HepG2 (cell line): ENCODE measurements at regions of chr3 and their contacts with region 1.

Region 1: DNA sequence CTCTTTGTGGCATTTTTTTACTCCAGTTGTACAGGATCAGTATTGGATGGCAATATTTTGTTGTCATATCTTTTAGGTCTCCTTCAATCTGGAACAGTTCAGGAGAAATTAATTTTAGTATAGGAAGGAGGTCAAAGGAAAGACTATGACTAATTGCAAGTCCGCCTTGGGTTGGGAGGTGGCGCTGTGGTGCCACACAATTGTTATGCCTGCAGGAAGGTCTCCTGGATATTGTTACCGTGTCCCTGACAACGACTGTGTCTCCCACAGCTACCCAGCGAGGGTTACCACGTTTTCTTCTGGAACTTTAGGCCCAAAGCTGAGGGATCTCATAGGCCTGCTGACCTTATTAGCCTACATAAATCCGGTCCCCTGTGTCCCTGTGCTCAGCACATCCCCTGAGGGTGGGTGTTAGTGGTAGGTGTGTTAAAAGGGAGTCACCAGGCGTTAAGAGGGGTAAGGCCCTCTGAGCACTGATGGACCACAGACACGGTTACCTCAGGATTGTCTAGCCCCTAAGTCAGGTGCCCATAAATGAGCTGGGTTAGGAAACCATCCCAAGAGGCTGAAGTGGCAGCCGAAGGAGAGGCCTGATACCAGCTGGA is 31.5 kb downstream of the KCNAB1 start:
- DNase-seq: peak; percentile 35
- ATAC-seq: peak; percentile 93
- H3K4me3 ChIP-seq: no peak overlapping the region
- H3K27ac ChIP-seq: no peak overlapping the region
- H3K4me1 ChIP-seq: no peaks in the 10 kb centered on the region
- H3K27me3 ChIP-seq: no peaks in the 10 kb centered on the region
- CTCF ChIP-seq: peak; percentile 85
- EP300 ChIP-seq: no peak
- POLR2A ChIP-seq: no peak
- RAD21 ChIP-seq: peak; percentile 76

Region 2: GRCh38 chr3:155995525-155996351 is 156.2 kb before region 1 on chr3:
- CTCF ChIA-PET with region 1: interaction called, 5 read pairs
- POLR2A ChIA-PET with region 1: no interaction called
- in situ Hi-C with region 1: no loop called
- intact Hi-C with region 1: loop called (anchors 1 kb)
- DNase-seq: peak; percentile 41
- ATAC-seq: peak; percentile 95
- H3K4me3 ChIP-seq: no peak overlapping the region
- H3K27ac ChIP-seq: no peak overlapping the region
- H3K4me1 ChIP-seq: no peaks in the 10 kb centered on the region
- H3K27me3 ChIP-seq: no peaks in the 10 kb centered on the region
- CTCF ChIP-seq: peak; percentile 72
- EP300 ChIP-seq: no peak
- POLR2A ChIP-seq: no peak
- RAD21 ChIP-seq: peak; percentile 62

Region 3: GRCh38 chr3:156382458-156383346 is 230.8 kb after region 1 on chr3:
- CTCF ChIA-PET with region 1: interaction called, 33 read pairs
- POLR2A ChIA-PET with region 1: no interaction called
- in situ Hi-C with region 1: loop called (anchors 5 kb)
- intact Hi-C with region 1: loop called (anchors 1 kb)
- DNase-seq: peak; percentile 24
- ATAC-seq: peak; percentile 96
- H3K4me3 ChIP-seq: no peak overlapping the region
- H3K27ac ChIP-seq: no peak overlapping the region
- H3K4me1 ChIP-seq: no peaks in the 10 kb centered on the region
- H3K27me3 ChIP-seq: 0 out of 5 replicates have a peak, but pooled peaks cover 0 to 3% of the 10 kb centered on the region in 2 experiments
- CTCF ChIP-seq: peak; percentile 77
- EP300 ChIP-seq: no peak
- POLR2A ChIP-seq: no peak
- RAD21 ChIP-seq: peak; percentile 70

Region 4: GRCh38 chr3:156449712-156450574 is 298.0 kb after region 1 on chr3:
- CTCF ChIA-PET with region 1: interaction called, 3 read pairs
- POLR2A ChIA-PET with region 1: no interaction called
- in situ Hi-C with region 1: no loop called
- intact Hi-C with region 1: loop called (anchors 2 kb)
- DNase-seq: peak; percentile 29
- ATAC-seq: peak; percentile 87
- H3K4me3 ChIP-seq: no peak overlapping the region
- H3K27ac ChIP-seq: no peak overlapping the region
- H3K4me1 ChIP-seq: no peaks in the 10 kb centered on the region
- H3K27me3 ChIP-seq: no peaks in the 10 kb centered on the region; a peak in 1 of 5 replicates
- CTCF ChIP-seq: peak; percentile 53
- EP300 ChIP-seq: no peak
- POLR2A ChIP-seq: no peak
- RAD21 ChIP-seq: no peak

Region 5: DNA sequence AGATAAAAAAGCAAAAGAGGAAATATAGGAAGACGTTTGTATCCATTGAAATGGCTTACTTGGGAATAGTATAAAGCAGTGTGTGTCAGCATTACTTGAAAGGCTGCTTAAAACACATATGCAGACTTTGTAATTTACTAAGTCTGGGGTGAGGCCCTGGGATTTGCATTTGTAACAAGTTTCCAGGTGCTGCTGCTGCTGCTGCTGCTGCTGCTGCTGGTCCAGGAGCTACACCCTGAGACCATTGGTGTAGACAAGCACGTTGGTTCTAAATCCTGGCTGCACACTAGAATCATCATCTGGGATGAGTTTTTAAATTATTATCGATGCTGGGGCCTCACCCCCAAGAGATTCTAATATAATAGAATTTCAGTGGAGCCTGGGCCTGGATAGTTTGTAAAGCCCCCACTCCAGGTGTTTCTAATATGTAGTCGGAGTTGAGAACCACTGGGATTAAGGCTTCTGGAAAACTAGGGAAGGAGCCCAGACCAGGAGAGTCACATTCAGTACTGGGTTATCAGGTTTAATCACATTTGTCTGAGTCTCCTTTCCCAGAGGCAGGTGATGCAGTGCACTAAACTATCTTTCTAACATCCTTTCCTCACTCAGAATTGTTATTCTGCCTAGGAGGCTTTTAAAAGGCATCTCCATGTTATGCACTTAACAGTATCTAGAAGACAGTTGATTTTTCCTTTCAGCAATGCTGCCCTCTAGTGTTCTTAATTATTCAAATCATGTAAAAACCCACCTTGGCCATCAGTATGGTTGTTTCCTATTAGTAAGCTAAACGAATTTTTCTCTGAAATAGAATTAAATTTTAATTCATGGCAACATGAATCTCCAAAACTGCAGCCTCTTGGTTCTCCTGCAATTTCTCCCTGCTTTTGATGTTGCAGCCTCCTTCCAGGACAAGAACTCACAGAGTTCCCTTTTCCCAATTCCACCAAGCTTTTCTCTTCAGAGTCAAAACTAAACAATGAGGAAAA is 357.6 kb after region 1 on chr3:
- CTCF ChIA-PET with region 1: interaction called, 15 read pairs
- POLR2A ChIA-PET with region 1: no interaction called
- in situ Hi-C with region 1: loop called (anchors 25 kb)
- intact Hi-C with region 1: loop called (anchors 1 kb)
- DNase-seq: peak; percentile 18
- ATAC-seq: peak; percentile 71
- H3K4me3 ChIP-seq: no peak overlapping the region
- H3K27ac ChIP-seq: no peak overlapping the region
- H3K4me1 ChIP-seq: peaks cover 11% of the 10 kb centered on the region
- H3K27me3 ChIP-seq: no peaks in the 10 kb centered on the region
- CTCF ChIP-seq: peak; percentile 63
- EP300 ChIP-seq: no peak
- POLR2A ChIP-seq: no peak
- RAD21 ChIP-seq: no peak

Region 6: GRCh38 chr3:157081681-157082210 is 929.8 kb after region 1 on chr3:
- CTCF ChIA-PET with region 1: no interaction called
- POLR2A ChIA-PET with region 1: no interaction called
- in situ Hi-C with region 1: no loop called
- intact Hi-C with region 1: loop called (anchors 2 kb)
- DNase-seq: peak; percentile 68
- ATAC-seq: peak; percentile 83
- H3K4me3 ChIP-seq: peak overlapping the region in 1 of 3 experiments; percentile 36; a peak in 1 of 6 replicates
- H3K27ac ChIP-seq: no peak overlapping the region
- H3K4me1 ChIP-seq: peaks cover 27% of the 10 kb centered on the region
- H3K27me3 ChIP-seq: no peaks in the 10 kb centered on the region
- CTCF ChIP-seq: peak; percentile 97
- EP300 ChIP-seq: no peak; a peak in 1 of 4 replicates
- POLR2A ChIP-seq: no peak
- RAD21 ChIP-seq: peak; percentile 96